Posterior cingulate gyrus (tissue), 11 donors: ENCODE measurements at regions of chr3 and their contacts with region 1.

Region 1: GRCh38 chr3:125594581-125595011 is 701 bp downstream of the OSBPL11 start:
- DNase-seq: no peak

Region 2: DNA sequence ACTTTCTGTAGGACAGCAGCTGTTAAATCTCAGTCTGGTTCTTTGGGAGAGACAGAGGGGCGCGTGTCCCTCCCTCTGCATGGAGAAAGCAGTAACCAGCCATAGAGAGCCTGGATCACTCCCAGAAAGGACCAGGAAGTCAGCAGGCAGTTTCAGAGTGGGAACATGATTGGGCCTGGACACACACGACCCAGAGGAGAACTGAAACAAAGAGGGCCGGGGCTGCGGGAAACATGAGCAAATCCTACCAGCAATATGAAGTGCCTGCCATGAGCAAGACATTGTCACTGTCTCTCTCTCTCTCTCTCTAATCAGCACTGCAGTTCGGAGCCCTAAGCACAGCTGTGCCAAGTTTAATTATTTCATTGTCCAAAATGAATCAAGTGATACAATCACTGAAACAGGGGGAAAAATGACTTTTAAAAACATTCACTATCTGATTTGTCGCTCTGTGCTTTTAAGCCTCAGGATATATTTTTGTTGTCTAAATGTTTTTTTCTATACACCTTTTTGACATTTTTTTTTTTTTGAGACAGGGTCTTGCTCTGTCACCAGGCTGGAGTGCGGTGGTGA is 677.7 kb before region 1 on chr3:
- intact Hi-C with region 1: no loop called
- DNase-seq: no peak

Region 3: DNA sequence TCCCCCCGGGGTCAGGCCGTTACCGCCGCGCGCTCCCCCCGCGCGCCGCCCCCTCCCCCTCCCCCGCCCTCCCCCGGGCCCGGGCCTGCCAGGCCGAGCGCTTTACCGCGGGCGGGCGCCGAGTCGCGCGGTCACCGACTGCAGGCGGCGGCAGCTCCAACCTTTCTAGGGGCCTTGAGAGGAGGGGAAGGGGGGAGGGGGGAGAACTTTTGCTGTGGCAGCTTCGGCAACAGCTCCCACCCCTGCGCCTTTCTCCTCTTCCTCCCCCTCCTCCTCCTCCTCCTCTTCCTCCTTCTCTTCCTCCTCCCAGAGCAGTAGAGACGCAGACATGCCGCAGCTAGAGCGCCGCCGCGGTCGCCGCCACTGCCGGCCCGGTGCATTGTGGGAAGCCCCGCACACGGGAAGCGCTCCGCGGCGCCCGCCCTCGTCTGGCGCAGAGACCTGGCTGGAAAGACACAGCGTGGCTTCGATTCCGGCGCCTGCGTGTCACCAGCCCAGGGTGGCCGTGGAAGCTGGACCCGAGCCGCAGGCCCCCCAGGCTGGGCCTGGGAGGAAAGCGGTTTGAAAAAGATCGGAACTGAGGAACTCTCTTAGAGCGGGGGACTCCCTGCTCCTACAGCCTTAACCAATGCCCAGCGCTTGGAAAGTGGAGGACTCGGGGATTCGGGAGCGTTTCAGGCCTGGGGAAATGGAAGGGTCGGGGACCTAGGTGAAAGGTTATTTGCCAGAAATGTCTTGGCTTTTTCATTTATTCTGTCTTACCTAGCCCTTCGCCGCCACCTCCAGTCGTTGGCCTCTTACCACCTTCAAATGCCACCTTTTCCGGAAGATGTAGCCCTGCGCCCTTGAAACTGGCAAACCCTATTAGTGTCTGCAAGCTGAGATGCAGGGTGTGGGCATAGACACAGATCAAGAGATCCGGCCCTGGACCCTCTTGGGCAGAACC is 219.3 kb before region 1 on chr3 and contains the start of gene ZNF148:
- intact Hi-C with region 1: loop called (anchors 10 kb)
- DNase-seq: peak; percentile 87 to 99 (median 89)

Region 4: DNA sequence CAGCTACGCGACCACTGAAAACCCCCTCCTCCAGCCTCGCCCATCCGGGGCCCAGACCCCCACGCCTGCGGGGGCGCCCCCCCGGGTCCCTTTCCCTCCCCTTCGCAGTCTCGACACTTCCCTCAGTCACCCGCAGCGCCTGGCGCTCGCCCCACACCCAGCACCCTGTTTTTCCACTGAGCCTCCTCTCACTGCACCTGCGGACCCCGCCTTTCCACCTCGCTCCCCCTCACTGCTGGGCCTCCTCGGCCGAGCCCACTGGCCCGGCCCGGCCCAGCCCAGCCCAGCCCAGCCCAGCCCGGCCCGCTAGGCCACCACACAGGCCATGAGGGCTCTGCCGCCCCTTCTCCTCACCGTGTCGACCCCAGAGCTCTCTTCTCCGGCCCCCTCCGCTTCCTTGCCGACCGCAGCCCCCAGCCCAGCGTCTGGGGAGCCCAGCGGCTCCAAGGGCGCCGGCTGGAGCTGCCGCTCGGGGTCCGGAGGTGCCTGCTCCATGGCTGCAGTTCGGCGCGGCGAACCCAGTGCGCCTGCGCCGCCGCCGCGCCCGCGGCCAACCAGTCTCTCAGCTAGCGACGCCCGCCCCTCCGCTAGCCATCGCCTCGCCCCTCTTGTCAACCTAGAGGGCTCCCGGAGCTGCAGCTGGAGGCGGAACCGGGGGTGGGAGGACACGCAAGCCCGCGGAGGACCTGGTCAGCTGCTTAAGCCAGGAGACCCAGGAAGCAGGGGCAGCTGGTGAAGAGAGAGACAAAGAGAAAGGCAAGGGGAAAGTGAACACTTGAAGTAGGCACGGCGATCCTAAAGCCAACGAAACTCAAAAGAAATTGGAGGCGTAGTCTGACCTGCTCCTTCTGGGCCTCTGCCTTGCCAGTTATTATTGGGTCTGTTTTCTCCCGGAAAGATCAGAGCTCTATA is 74.7 kb before region 1 on chr3 and contains the start of gene SNX4:
- intact Hi-C with region 1: loop called (anchors 5 kb)
- DNase-seq: peak; percentile 80 to 99 (median 92)

Region 5: DNA sequence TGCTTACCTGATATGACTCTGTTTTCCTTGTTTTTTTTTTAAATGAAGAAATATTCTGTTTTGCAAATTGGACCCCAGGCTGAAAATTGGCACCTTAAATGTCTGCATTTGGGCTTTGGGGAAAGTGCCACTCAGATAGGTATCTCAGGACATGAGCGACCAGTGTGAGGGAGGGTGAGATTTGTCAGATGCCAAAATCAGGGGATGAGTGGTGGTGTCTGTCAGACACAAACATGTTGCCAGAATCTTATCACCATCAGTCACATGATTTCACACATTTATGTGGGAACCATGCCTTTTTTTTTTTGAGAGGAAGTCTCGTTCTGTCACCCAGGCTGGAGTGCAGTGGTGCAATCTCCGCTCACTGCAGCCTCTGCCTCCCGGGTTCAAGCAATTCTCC is 76.3 kb after region 1 on chr3:
- intact Hi-C with region 1: no loop called
- DNase-seq: no peak